ENCODE measurements at regions of chr12 and their contacts with region 1.

Region 1: GRCh38 chr12:70242695-70243509 is at the start of gene CNOT2:
- DNase-seq: peak; percentile 76 to 91 (median 90)
- ATAC-seq: peak; percentile 89
- H3K4me3 ChIP-seq: peak within 1 kb of the TSS; percentile 80
- H3K4me3 Mint-ChIP-seq: peak within 1 kb of the TSS; percentile 96 to 100 (median 98)
- H3K27ac ChIP-seq: peak within 1 kb of the TSS; percentile 99
- H3K27ac Mint-ChIP-seq: peak within 1 kb of the TSS; percentile 94 to 100 (median 99)
- H3K4me1 ChIP-seq: peaks cover 33 to 41% of the 10 kb centered on the region in 2 donors
- H3K4me1 Mint-ChIP-seq: peaks cover 43 to 77% (median 70%) of the 10 kb centered on the region in 7 donors
- H3K27me3 ChIP-seq: no peaks in the 10 kb centered on the region
- H3K27me3 Mint-ChIP-seq: peaks cover 0 to 3% (median 0%) of the 10 kb centered on the region in 5 donors
- total RNA-seq, gene CNOT2: 76.2 to 144 (median 116) TPM

Region 2: DNA sequence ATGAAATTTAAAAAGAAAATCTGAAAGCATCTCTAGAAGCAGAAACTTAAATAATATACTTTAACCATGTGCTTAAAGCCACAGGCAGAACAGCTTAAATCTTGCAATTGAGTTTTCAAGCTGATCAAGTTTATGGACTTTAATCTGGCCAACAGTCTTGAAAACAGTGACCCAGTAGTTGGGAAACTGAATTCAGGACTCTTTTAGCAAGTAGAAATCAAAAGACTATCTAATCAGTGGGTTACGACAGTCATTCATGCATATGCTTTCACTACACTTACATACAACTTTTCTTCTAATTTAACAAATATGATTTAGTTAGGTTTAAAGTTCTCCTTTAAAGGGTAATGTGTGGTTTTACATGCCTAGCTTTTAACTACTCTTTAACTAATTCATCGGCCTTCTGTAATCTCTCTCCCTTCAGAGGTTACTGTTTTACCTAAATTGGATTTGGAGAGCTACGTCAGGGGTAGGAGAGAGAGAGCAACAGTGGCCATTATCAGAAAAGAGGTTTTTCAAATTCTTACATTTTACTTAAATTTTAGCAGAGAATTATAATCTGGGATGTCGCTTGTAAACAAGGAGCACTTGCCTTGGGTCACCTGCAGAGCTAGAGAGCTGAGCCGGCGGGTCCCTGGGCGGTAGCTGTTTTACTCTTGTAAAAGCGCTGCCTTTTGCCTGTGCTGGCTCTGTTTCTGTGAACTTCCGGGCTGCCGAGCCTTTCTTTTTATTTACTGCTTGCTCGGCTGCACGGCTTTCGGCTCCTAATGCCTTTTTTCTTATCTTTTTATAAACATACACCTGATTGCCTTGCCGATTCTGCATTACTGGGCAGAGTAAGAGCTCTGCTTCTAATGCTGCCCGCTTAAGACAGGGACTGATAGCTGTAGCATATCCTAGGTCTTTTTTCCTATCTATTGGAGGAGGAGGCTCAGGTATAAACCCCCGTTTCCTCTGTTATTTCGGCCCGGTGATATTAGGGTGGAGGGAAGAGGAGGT is 912.1 kb before region 1 on chr12:
- CTCF ChIA-PET with region 1: no interaction called
- POLR2A ChIA-PET with region 1: interaction called, 7 read pairs
- intact Hi-C with region 1: loop called in 1 of 2 experiments (anchors 2 kb)
- DNase-seq: peak; percentile 28 to 83 (median 76)
- ATAC-seq: peak; percentile 78
- H3K4me3 ChIP-seq: peak overlapping the region; percentile 83
- H3K4me3 Mint-ChIP-seq: peak overlapping the region; percentile 75 to 97 (median 96)
- H3K27ac ChIP-seq: peak overlapping the region; percentile 92
- H3K27ac Mint-ChIP-seq: peak overlapping the region; percentile 91 to 99 (median 96)
- H3K4me1 ChIP-seq: peaks cover 20 to 51% of the 10 kb centered on the region in 2 donors
- H3K4me1 Mint-ChIP-seq: peaks cover 10 to 76% (median 71%) of the 10 kb centered on the region in 7 donors
- H3K27me3 ChIP-seq: no peaks in the 10 kb centered on the region
- H3K27me3 Mint-ChIP-seq: peaks cover 0 to 20% (median 0%) of the 10 kb centered on the region in 5 donors

Region 3: DNA sequence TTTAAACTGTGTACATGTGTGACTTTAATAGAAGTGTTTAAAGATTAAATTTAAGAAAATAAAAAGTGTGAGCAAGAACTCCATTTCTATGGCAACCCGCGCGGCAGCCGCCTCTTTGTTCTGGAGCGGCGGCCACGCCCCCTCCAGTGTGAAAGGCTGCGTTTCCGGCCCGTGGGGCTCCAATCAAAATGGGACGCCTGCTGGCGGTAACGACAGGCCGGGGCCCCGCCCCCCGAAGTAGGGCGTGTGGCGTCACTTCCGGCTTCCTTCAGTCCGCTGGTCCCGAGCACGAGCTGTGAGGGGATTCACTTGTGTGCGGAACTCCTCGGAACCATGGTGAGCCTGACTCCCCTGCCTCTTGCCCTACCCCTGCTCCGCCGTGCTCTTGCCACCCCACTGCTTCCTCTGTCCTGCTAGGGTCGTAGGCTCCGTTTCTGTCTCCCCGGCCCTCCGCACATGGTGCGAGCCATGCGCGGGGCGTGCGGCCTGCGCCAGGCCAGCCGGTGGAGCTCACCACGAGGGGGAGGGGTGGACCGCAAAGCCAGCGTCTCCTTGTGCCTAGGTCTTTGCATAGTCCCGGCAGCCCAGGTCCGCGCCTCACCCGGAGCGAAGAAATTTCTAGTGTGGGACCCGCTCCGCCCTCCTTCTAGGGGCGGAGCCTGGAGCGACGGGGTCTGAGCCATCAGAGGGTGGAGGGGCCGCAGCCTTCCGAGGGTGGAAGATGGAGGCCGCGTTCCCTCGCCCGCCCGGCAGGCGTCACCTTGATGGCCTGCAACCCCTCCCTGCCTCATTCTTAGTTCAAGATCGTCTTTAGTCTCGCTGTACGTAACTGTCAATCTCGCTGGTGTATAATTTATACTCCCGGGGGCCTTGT is 657.5 kb before region 1 on chr12 and contains the start of gene CCT2:
- CTCF ChIA-PET with region 1: no interaction called
- POLR2A ChIA-PET with region 1: no interaction called
- intact Hi-C with region 1: loop called (anchors 2 to 5 kb)
- DNase-seq: peak; percentile 88 to 96 (median 95)
- ATAC-seq: peak; percentile 97
- H3K4me3 ChIP-seq: peak within 1 kb of the TSS; percentile 100
- H3K4me3 Mint-ChIP-seq: peak within 1 kb of the TSS; percentile 84 to 97 (median 95)
- H3K27ac ChIP-seq: peak within 1 kb of the TSS; percentile 96
- H3K27ac Mint-ChIP-seq: peak within 1 kb of the TSS; percentile 91 to 98 (median 97)
- H3K4me1 ChIP-seq: peaks cover 7 to 11% of the 10 kb centered on the region in 2 donors
- H3K4me1 Mint-ChIP-seq: peaks cover 9 to 28% (median 17%) of the 10 kb centered on the region in 7 donors
- H3K27me3 ChIP-seq: no peaks in the 10 kb centered on the region
- H3K27me3 Mint-ChIP-seq: no peaks in the 10 kb centered on the region
- total RNA-seq, gene CCT2: 106 to 200 (median 157) TPM

Region 4: DNA sequence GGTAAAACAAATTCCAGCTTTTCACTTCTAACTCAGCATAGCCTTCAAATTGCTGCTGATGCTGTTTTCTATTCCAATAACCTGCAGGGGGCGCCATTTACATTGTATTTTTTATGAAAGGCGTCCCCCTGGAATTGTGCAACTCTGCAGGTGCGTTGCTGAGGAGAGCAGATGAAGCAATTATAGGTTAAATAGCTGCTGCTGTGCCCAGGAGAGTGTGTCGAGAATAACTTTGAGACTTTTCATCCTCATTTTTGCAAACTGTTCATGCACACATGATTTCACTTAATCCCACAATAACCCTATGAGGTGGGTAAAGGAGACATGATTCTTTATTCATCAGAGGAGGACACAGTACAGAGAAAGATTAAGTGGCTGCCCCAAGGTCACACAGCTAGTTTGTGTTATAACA is 342.2 kb before region 1 on chr12:
- CTCF ChIA-PET with region 1: no interaction called
- POLR2A ChIA-PET with region 1: no interaction called
- intact Hi-C with region 1: no loop called
- DNase-seq: peak; percentile 23 to 67 (median 50)
- ATAC-seq: peak; percentile 56
- H3K4me3 ChIP-seq: no peak overlapping the region
- H3K4me3 Mint-ChIP-seq: no peak overlapping the region
- H3K27ac ChIP-seq: no peak overlapping the region
- H3K27ac Mint-ChIP-seq: no peak overlapping the region
- H3K4me1 ChIP-seq: no peaks in the 10 kb centered on the region
- H3K4me1 Mint-ChIP-seq: peaks cover 0 to 2% (median 0%) of the 10 kb centered on the region in 7 donors
- H3K27me3 ChIP-seq: no peaks in the 10 kb centered on the region
- H3K27me3 Mint-ChIP-seq: peaks cover 0 to 4% (median 2%) of the 10 kb centered on the region in 5 donors

Region 5: DNA sequence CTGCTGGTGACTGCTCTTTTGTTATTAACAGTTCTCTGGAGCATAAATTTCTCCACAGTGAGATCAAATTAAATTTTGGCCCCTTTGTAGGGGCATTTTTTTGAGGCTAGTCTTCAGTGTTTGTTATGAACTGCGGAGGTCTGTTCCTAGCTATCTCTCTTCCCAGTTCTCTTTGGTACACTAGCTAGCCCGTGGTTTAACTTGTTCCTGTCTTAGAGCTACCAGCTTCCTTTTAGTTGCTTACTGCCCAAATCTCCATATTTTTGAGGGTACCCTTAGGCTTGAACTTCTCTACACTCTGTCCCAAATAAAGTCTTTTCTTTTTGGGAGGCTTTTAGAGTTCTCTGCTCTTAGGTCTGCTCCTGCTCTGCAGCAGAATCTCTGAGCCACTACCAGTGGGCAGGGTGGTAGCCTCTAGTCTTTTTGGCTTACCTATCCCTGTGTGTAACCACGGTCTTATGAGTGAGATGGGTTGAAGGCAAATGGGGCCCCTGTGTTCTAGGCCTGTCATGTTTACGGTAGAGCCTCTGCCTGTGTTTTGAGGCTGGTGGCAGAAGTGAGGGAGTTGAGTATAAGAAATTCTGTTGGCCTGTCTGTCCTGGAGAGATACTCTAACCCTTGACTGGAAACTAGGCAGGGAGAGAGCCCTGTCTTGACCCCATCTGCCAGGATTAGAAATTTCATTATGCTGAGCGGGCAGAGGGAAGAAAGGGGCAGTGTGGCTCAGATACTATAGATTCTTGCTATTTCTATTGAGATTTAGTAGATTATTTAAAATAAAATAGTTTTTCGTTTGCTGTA is 21.4 kb after region 1 on chr12:
- CTCF ChIA-PET with region 1: no interaction called
- POLR2A ChIA-PET with region 1: no interaction called
- intact Hi-C with region 1: no loop called
- DNase-seq: no peak
- ATAC-seq: peak; percentile 47
- H3K4me3 ChIP-seq: no peak overlapping the region
- H3K4me3 Mint-ChIP-seq: peak overlapping the region in 7 of 10 donors; percentile 0 to 53 (median 30)
- H3K27ac ChIP-seq: no peak overlapping the region
- H3K27ac Mint-ChIP-seq: peak overlapping the region in 5 of 9 donors; percentile 28 to 56 (median 53)
- H3K4me1 ChIP-seq: peaks cover 23% of the 10 kb centered on the region in 2 donors
- H3K4me1 Mint-ChIP-seq: peaks cover 37 to 95% (median 87%) of the 10 kb centered on the region in 7 donors
- H3K27me3 ChIP-seq: no peaks in the 10 kb centered on the region
- H3K27me3 Mint-ChIP-seq: no peaks in the 10 kb centered on the region

Region 6: GRCh38 chr12:70283232-70283631 is 40.3 kb after region 1 on chr12:
- CTCF ChIA-PET with region 1: no interaction called
- POLR2A ChIA-PET with region 1: no interaction called
- intact Hi-C with region 1: loop called in 1 of 2 experiments (anchors 5 kb)
- DNase-seq: no peak
- ATAC-seq: no peak
- H3K4me3 ChIP-seq: no peak overlapping the region
- H3K4me3 Mint-ChIP-seq: no peak overlapping the region
- H3K27ac ChIP-seq: no peak overlapping the region
- H3K27ac Mint-ChIP-seq: peak overlapping the region in 1 of 9 donors; percentile 30
- H3K4me1 ChIP-seq: peaks cover 0 to 3% of the 10 kb centered on the region in 2 donors
- H3K4me1 Mint-ChIP-seq: peaks cover 7 to 73% (median 56%) of the 10 kb centered on the region in 7 donors
- H3K27me3 ChIP-seq: no peaks in the 10 kb centered on the region
- H3K27me3 Mint-ChIP-seq: no peaks in the 10 kb centered on the region

Region 7: DNA sequence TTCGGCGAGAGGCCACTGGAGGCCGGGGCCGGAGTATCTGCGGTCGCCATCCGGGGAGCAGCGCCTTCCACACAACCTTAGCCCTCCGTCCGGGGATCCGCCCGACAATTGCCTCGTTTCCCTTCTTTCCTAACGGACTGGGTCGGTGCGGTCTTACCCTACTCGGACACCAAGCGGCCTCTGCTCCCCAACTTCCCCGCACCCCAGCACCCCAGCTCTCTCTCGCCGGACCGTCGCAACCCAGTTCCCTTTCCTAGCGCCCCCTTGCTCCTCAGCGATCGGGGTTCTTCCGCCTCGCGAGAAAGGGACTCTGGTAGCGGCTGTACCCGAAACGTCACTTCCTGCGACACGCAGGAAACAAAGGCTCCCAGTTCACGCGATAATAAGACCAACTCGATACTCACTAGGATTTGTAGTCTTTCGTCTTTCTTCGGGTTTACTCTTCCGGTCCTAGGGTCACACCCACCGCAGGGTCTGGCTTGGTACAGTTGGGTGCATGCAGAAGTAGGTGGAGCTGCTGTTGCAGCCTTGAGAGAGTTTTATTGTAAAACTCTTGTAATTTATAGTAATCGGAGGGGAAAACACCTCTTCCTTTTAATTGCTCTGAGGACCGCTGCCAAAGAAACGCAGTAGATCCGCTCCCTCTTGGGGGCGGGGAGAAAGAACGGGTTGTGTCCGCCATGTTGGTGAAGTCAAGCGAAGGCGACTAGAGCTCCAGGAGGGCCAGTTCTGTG is 1420.8 kb after region 1 on chr12 and contains the start of gene ZFC3H1:
- CTCF ChIA-PET with region 1: no interaction called
- POLR2A ChIA-PET with region 1: interaction called, 3 read pairs
- intact Hi-C with region 1: loop called (anchors 1 kb)
- DNase-seq: peak; percentile 78 to 97 (median 95)
- ATAC-seq: peak; percentile 87
- H3K4me3 ChIP-seq: peak within 1 kb of the TSS; percentile 76
- H3K4me3 Mint-ChIP-seq: peak within 1 kb of the TSS; percentile 94 to 100 (median 99)
- H3K27ac ChIP-seq: peak within 1 kb of the TSS; percentile 97
- H3K27ac Mint-ChIP-seq: peak within 1 kb of the TSS; percentile 96 to 100 (median 99)
- H3K4me1 ChIP-seq: peaks cover 25 to 29% of the 10 kb centered on the region in 2 donors
- H3K4me1 Mint-ChIP-seq: peaks cover 34 to 70% (median 60%) of the 10 kb centered on the region in 7 donors
- H3K27me3 ChIP-seq: no peaks in the 10 kb centered on the region
- H3K27me3 Mint-ChIP-seq: no peaks in the 10 kb centered on the region
- total RNA-seq, gene ZFC3H1: 74.6 to 147 (median 133) TPM

Region 8: GRCh38 chr12:71840231-71840847 is 1597.4 kb after region 1 on chr12:
- CTCF ChIA-PET with region 1: no interaction called
- POLR2A ChIA-PET with region 1: no interaction called
- intact Hi-C with region 1: loop called (anchors 1 to 10 kb)
- DNase-seq: peak in 2 of 9 donors; percentile 22 to 59
- ATAC-seq: peak; percentile 21
- H3K4me3 ChIP-seq: peak overlapping the region; percentile 80
- H3K4me3 Mint-ChIP-seq: peak overlapping the region; percentile 91 to 97 (median 94)
- H3K27ac ChIP-seq: peak overlapping the region; percentile 96
- H3K27ac Mint-ChIP-seq: peak overlapping the region; percentile 96 to 100 (median 99)
- H3K4me1 ChIP-seq: peaks cover 14 to 35% of the 10 kb centered on the region in 2 donors
- H3K4me1 Mint-ChIP-seq: peaks cover 29 to 69% (median 48%) of the 10 kb centered on the region in 7 donors
- H3K27me3 ChIP-seq: no peaks in the 10 kb centered on the region
- H3K27me3 Mint-ChIP-seq: no peaks in the 10 kb centered on the region

Measured in naive thymus-derived CD4-positive, alpha-beta T cell (primary cell).